Posterior vena cava (tissue), 2 donors: ENCODE measurements at regions of chr12 and their contacts with region 1.

Region 1: GRCh38 chr12:131493068-131493826 is 217.6 kb upstream of the SFSWAP start:
- DNase-seq: no peak

Region 2: DNA sequence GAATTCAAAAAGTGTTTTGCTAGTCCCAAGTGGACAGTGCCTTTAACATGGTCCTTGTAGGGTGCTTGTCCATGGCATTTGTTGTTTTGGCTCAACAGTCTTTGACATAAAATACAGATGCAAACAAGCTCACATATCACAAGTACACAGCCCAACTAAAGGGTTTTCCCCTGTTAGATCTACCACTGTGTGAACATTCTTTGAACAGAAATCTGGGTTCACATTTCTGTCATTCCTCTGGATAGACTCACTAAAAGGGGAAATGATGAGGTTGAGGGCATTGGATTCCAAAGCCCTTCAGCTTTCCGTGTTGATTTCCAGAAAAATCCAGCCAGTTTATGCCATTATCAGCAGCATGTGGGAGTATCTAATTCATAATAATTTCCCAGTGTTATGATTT is 510.6 kb after region 1 on chr12:
- intact Hi-C with region 1: loop called in 1 of 2 experiments (anchors 5 kb)
- DNase-seq: no peak